ENCODE measurements at regions of chr5 and their contacts with region 1.

Region 1: DNA sequence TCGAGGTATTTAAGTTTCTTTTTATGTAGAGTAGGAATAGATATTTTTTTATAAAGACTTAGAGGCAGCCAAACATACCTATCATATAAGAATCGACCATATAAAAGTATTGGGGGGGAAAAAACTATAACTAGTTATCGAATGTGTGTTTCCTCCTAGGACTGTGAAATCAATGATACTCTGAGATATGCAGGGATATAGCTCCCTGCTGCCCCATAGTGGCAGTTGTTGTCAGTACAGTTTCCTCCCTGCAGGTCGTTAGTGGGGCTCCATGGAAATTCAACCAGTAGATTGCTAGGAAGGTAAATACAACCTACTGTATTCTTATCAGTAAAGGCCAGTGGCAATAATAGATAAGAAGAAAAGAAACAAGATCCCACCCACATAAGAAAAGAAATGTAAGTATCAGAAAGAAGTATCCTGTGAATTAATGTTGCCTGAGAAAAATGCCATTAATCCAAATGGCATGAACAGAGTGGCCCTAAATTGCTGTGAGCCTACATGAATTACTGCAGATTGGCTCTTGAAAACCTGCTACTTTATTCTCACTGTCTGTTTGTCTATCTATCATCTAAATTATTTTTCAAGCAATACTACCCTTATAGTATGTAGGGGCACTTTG is 136.9 kb upstream of the FBN2 start:
- DNase-seq: peak; percentile 84
- H3K4me3 Mint-ChIP-seq: no peak overlapping the region
- H3K27ac Mint-ChIP-seq: no peak overlapping the region
- H3K4me1 Mint-ChIP-seq: no peaks in the 10 kb centered on the region
- H3K27me3 Mint-ChIP-seq: no peaks in the 10 kb centered on the region
- CTCF ChIP-seq: peak; percentile 81

Region 2: DNA sequence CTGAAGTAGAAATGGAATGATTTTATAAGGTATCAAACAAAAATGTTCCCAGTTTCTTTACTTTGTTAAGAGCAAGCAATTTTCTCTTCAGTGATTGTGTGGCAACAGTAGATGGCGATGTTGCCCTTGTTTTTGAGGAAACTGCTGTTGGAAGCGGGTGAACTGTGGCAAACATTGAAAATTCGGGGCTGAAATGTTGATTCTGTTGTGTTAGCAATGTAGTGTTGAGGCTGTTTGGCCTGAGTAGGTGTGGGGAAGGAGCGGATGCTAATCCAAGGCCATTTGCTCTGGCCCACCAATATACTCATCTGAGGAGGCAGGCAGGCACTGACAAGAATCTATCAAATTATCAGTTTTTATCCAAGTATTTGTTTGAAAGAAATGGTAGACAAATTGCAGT is 461.6 kb before region 1 on chr5:
- CTCF ChIA-PET with region 1: interaction called, 15 read pairs
- POLR2A ChIA-PET with region 1: no interaction called
- intact Hi-C with region 1: loop called (anchors 1 kb)
- DNase-seq: peak; percentile 78
- H3K4me3 Mint-ChIP-seq: no peak overlapping the region
- H3K27ac Mint-ChIP-seq: no peak overlapping the region
- H3K4me1 Mint-ChIP-seq: peaks cover 11% of the 10 kb centered on the region
- H3K27me3 Mint-ChIP-seq: no peaks in the 10 kb centered on the region
- CTCF ChIP-seq: peak; percentile 96

Region 3: GRCh38 chr5:128538250-128539037 is 136.5 kb before region 1 on chr5:
- CTCF ChIA-PET with region 1: interaction called, 4 read pairs
- POLR2A ChIA-PET with region 1: interaction called, 3 read pairs
- intact Hi-C with region 1: loop called (anchors 1 kb)
- DNase-seq: peak; percentile 98
- H3K4me3 Mint-ChIP-seq: peak overlapping the region; percentile 79
- H3K27ac Mint-ChIP-seq: peak overlapping the region; percentile 26
- H3K4me1 Mint-ChIP-seq: peaks cover 20% of the 10 kb centered on the region
- H3K27me3 Mint-ChIP-seq: no peaks in the 10 kb centered on the region
- CTCF ChIP-seq: no peak

Region 4: GRCh38 chr5:128684959-128685358 is 10.0 kb after region 1 on chr5:
- CTCF ChIA-PET with region 1: interaction called, 21 read pairs
- POLR2A ChIA-PET with region 1: no interaction called
- intact Hi-C with region 1: no loop called
- DNase-seq: no peak
- H3K4me3 Mint-ChIP-seq: no peak overlapping the region
- H3K27ac Mint-ChIP-seq: no peak overlapping the region
- H3K4me1 Mint-ChIP-seq: no peaks in the 10 kb centered on the region
- H3K27me3 Mint-ChIP-seq: no peaks in the 10 kb centered on the region
- CTCF ChIP-seq: no peak

Region 5: DNA sequence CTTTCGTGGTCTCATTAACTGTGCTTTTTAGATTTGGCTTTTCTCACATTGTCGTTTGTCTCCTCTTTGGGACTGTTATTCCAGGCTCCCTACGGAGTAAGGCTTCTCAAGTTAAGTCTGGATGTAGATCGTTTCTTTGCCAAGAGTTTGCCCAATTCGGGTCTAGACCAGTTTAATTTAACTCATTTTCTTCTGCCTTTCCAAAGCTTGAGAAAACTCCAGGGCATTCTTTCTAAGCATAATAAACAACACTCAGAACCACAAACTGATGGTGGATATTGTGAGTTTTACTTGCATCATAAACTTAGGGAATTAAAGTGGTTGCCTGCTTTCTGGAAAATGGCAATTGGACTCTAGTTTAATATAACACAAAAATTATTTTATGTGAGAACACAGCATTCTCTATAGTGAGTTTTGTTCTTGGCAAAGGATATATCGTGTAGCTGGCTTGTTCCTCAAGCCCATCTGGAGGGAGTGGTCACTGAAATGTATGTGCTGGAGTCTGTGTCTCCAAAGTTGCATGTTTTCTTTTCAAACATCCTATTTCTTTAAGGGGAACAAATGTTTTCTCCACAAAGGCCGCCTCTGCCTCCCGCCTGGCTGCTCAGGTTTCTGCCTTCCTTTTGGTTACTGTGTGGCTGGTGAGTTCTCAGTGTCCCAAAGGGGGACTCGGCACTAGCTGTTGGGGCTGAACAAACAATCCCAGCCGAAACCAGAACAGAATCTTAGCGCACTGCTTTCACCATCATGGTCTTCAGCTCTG is 74.4 kb after region 1 on chr5:
- CTCF ChIA-PET with region 1: no interaction called
- POLR2A ChIA-PET with region 1: no interaction called
- intact Hi-C with region 1: no loop called
- DNase-seq: no peak
- H3K4me3 Mint-ChIP-seq: no peak overlapping the region
- H3K27ac Mint-ChIP-seq: no peak overlapping the region
- H3K4me1 Mint-ChIP-seq: peaks cover 5% of the 10 kb centered on the region
- H3K27me3 Mint-ChIP-seq: peaks cover 50% of the 10 kb centered on the region
- CTCF ChIP-seq: no peak